Naive thymus-derived CD4-positive, alpha-beta T cell (primary cell): ENCODE measurements at regions of chr6 and their contacts with region 1.

Region 1: DNA sequence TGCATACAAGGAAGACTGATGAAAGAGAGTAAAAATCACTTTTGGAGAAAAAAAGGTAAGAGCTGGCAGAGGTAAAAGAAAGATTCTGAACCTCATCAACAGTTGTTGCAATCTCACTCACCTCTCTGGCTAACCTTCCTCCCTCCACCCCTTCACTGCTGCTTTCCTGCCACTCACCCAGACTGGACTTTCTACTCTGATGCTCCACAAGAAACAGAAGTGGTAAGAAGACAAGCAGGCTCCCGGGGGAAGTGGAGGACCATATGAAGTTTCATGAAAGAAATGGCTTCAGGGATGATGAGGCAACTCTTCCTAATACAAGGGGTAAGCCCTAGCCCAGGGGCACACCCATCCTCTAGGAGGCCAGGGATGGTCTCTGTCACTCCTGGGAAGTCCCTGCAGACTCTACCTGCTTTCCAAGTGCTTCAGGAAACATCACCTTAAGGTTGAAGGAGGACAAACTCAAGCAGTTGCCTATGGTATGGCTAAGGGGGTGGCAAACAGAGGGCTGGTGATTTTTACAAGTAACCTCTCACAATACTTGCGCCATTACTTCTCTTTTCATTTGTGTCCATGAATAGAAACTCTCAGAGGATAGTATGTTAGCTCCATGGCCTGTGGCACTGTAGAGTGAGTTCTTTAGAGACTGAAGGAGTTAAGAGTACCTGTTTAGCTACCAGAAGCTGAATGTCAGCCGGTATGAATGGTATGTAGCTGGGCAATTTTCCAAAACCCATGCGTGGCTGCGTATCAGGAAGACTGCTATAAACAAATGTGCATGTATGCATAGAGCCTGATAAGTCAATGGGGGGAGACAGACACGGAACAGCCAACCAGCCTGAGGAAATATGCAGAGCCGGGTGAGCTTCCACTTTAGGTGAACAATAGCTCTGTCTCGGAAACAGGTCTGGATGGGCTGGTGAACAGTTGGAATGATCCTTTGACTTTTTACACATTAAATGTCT is 112.0 kb downstream of the BACH2 start:
- DNase-seq: peak in 2 of 9 donors; percentile 31 to 41
- ATAC-seq: no peak
- H3K4me3 ChIP-seq: peak overlapping the region; percentile 18
- H3K4me3 Mint-ChIP-seq: peak overlapping the region; percentile 1 to 81 (median 66)
- H3K27ac ChIP-seq: peak overlapping the region; percentile 50
- H3K27ac Mint-ChIP-seq: peak overlapping the region; percentile 47 to 97 (median 93)
- H3K4me1 ChIP-seq: peaks cover 0 to 63% of the 10 kb centered on the region in 2 donors
- H3K4me1 Mint-ChIP-seq: peaks cover 34 to 91% (median 79%) of the 10 kb centered on the region in 7 donors
- H3K27me3 ChIP-seq: no peaks in the 10 kb centered on the region
- H3K27me3 Mint-ChIP-seq: no peaks in the 10 kb centered on the region

Region 2: GRCh38 chr6:89970609-89971337 is 213.8 kb before region 1 on chr6:
- CTCF ChIA-PET with region 1: no interaction called
- POLR2A ChIA-PET with region 1: no interaction called
- intact Hi-C with region 1: loop called (anchors 1 to 5 kb)
- DNase-seq: peak in 7 of 9 donors; percentile 31 to 54 (median 39)
- ATAC-seq: peak; percentile 72
- H3K4me3 ChIP-seq: no peak overlapping the region
- H3K4me3 Mint-ChIP-seq: no peak overlapping the region
- H3K27ac ChIP-seq: no peak overlapping the region
- H3K27ac Mint-ChIP-seq: no peak overlapping the region
- H3K4me1 ChIP-seq: peaks cover 0 to 15% of the 10 kb centered on the region in 2 donors
- H3K4me1 Mint-ChIP-seq: peaks cover 9 to 53% (median 40%) of the 10 kb centered on the region in 7 donors
- H3K27me3 ChIP-seq: no peaks in the 10 kb centered on the region
- H3K27me3 Mint-ChIP-seq: no peaks in the 10 kb centered on the region

Region 3: DNA sequence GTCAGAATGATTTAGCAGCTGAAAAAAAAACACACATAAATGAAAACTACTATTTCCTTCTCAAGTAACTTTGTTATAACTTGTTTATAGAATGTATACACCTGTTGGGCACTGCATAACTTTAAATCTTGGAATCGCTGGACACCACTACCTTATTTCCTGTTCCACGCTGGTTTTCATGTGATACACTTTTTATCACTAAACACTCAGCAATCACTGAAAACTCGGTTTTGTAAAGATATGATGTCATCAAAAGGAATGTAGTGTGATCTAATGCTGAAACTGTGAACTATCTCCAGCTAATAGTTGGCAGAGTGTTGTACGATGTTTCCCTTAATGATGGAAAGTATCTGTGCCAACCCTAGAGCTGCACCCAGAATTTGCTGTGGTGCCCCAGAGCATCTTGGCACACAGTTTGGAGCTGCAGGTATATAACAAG is 15.9 kb before region 1 on chr6:
- CTCF ChIA-PET with region 1: interaction called, 4 read pairs
- POLR2A ChIA-PET with region 1: no interaction called
- intact Hi-C with region 1: loop called in 1 of 2 experiments (anchors 2 kb)
- DNase-seq: no peak
- ATAC-seq: no peak
- H3K4me3 ChIP-seq: no peak overlapping the region
- H3K4me3 Mint-ChIP-seq: peak overlapping the region in 2 of 10 donors; percentile 40 to 45
- H3K27ac ChIP-seq: no peak overlapping the region
- H3K27ac Mint-ChIP-seq: peak overlapping the region in 4 of 9 donors; percentile 14 to 62 (median 40)
- H3K4me1 ChIP-seq: peaks cover 0 to 27% of the 10 kb centered on the region in 2 donors
- H3K4me1 Mint-ChIP-seq: peaks cover 11 to 86% (median 75%) of the 10 kb centered on the region in 7 donors
- H3K27me3 ChIP-seq: no peaks in the 10 kb centered on the region
- H3K27me3 Mint-ChIP-seq: no peaks in the 10 kb centered on the region

Region 4: GRCh38 chr6:90202156-90202555 is 17.5 kb after region 1 on chr6:
- CTCF ChIA-PET with region 1: interaction called, 8 read pairs
- POLR2A ChIA-PET with region 1: interaction called, 6 read pairs
- intact Hi-C with region 1: loop called in 1 of 2 experiments (anchors 2 kb)
- DNase-seq: no peak
- ATAC-seq: peak; percentile 45
- H3K4me3 ChIP-seq: no peak overlapping the region
- H3K4me3 Mint-ChIP-seq: peak overlapping the region; percentile 35 to 74 (median 53)
- H3K27ac ChIP-seq: peak overlapping the region; percentile 25
- H3K27ac Mint-ChIP-seq: peak overlapping the region; percentile 64 to 91 (median 79)
- H3K4me1 ChIP-seq: peaks cover 0 to 21% of the 10 kb centered on the region in 2 donors
- H3K4me1 Mint-ChIP-seq: peaks cover 24 to 92% (median 53%) of the 10 kb centered on the region in 7 donors
- H3K27me3 ChIP-seq: no peaks in the 10 kb centered on the region
- H3K27me3 Mint-ChIP-seq: no peaks in the 10 kb centered on the region

Region 5: DNA sequence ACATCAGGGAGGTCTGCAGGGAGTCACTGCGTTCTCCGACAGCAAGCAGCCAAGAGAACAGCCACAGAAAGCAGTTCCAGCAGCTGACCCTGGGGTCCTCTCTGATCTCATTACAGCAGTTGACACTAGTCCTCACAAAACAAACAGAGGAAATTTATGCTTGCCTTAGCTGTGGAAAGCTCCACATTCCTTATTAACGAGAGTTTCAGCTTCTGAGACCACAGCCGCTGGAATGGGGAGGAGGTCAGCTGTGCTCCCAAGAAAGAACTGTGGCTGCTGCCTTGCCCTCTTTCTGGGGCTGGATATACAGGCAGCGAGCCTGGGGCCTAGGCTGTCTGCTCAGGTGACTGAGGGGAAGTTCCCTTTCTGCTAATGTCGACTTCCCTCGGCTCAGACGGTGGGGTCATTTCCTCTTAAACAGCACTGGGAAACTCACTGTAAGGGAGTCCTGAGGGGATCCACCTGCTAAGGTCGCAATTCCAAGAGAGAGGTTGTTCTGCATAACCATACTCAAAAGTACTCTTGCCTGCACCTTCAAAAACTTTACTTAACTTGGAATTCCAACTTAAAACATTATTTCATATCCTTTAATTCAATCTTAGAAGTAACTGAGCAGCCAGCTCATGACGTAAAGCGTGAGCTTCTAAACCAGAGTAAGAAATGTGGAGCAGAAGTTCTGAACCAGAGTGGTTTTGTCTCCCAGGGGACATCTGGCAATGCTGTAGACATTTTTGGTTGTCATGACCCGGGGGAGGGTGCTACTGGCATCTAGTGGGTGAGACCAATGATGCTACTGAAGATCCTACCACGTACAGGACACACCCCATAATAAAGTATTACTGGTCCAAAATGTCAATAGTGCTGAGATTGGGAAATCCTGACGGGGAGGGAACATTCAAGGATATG is 31.7 kb after region 1 on chr6:
- CTCF ChIA-PET with region 1: interaction called, 3 read pairs
- POLR2A ChIA-PET with region 1: interaction called, 7 read pairs
- intact Hi-C with region 1: loop called in 1 of 2 experiments (anchors 2 kb)
- DNase-seq: peak in 5 of 9 donors; percentile 61 to 82 (median 63)
- ATAC-seq: peak; percentile 69
- H3K4me3 ChIP-seq: peak overlapping the region; percentile 18
- H3K4me3 Mint-ChIP-seq: peak overlapping the region in 7 of 10 donors; percentile 42 to 74 (median 68)
- H3K27ac ChIP-seq: peak overlapping the region; percentile 85
- H3K27ac Mint-ChIP-seq: no peak overlapping the region
- H3K4me1 ChIP-seq: peaks cover 0 to 97% of the 10 kb centered on the region in 2 donors
- H3K4me1 Mint-ChIP-seq: peaks cover 0 to 33% (median 31%) of the 10 kb centered on the region in 7 donors
- H3K27me3 ChIP-seq: no peaks in the 10 kb centered on the region
- H3K27me3 Mint-ChIP-seq: no peaks in the 10 kb centered on the region